Esophagus muscularis mucosa (tissue), 4 donors: ENCODE measurements at regions of chr1 and their contacts with region 1.

Region 1: DNA sequence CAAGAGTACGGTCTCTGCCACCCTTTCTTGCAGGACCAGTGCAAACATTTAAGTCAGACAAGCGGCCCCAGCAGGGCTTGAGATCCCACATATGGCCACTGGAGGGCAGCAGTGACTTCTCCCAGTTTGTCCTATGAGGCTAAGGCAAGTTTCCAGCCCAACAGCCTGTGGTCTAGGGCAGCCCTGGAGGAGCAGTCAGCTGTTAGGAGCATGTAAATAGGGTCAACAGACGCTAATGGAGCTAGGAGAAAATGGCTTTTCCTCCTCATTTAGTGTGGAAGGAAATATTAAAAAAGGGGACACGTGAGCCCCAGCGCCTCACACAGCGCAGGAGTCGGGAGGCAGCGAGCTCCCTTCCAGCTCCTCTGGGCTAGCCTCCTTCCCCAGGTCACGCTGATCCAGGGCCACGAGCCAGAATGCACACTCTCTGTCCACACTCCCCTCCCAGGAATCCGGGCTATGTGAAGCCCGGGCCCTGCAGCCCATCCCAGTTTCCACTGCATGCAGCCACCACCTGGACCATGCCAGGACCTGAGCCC is 95.6 kb downstream of the LAMC2 start:
- DNase-seq: peak; percentile 98
- H3K4me3 ChIP-seq: peak overlapping the region in 2 of 4 donors; percentile 16 to 20
- H3K27ac ChIP-seq: peak overlapping the region; percentile 56 to 77 (median 62)
- H3K4me1 ChIP-seq: peaks cover 34 to 42% (median 40%) of the 10 kb centered on the region in 4 donors
- H3K27me3 ChIP-seq: no peaks in the 10 kb centered on the region
- CTCF ChIP-seq: peak; percentile 96 to 97 (median 97)
- EP300 ChIP-seq: no peak
- POLR2A ChIP-seq: no peak

Region 2: GRCh38 chr1:183318433-183318832 is 36.8 kb after region 1 on chr1:
- intact Hi-C with region 1: loop called (anchors 1 kb)
- DNase-seq: peak; percentile 95
- H3K4me3 ChIP-seq: no peak overlapping the region
- H3K27ac ChIP-seq: peak overlapping the region; percentile 47 to 73 (median 59)
- H3K4me1 ChIP-seq: peaks cover 24 to 43% (median 33%) of the 10 kb centered on the region in 4 donors
- H3K27me3 ChIP-seq: no peaks in the 10 kb centered on the region
- CTCF ChIP-seq: peak; percentile 64 to 74 (median 73)
- EP300 ChIP-seq: no peak
- POLR2A ChIP-seq: no peak

Region 3: GRCh38 chr1:183339556-183340167 is 58.0 kb after region 1 on chr1:
- intact Hi-C with region 1: no loop called
- DNase-seq: no peak
- H3K4me3 ChIP-seq: no peak overlapping the region
- H3K27ac ChIP-seq: no peak overlapping the region
- H3K4me1 ChIP-seq: no peaks in the 10 kb centered on the region
- H3K27me3 ChIP-seq: no peaks in the 10 kb centered on the region
- CTCF ChIP-seq: no peak
- EP300 ChIP-seq: no peak
- POLR2A ChIP-seq: no peak

Region 4: DNA sequence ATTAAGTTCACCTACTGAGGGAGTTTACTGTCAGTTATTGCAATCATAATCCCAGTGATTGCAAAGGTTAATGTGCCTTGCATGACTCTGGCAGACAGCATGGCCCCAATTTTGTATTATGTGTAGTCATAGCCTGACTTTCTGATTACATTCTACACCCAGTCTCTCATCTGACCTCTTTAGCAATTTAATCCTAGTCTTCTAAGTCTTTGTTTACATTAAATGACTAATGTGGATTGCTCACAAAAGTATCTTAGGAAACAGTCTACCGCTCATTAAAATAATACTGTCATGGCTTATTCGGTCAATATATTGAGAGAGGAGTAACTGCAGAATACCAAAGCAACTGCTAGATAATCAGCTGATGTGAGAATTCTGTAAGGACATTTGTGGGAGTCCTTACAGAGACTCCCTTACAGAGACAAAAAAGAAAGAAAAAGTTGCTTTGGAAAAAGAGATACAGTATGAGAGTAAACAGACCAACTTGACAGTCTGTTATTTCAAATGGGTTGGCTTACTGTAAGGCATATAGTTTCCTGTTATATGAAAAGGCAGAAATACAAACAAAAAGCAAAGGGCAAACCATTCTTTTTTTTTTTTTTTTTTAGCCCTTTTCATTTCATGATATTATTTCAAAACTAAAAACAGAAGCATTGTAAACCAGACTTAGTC is 233.5 kb after region 1 on chr1:
- intact Hi-C with region 1: no loop called
- DNase-seq: no peak
- H3K4me3 ChIP-seq: no peak overlapping the region
- H3K27ac ChIP-seq: no peak overlapping the region
- H3K4me1 ChIP-seq: peaks cover 8 to 22% (median 16%) of the 10 kb centered on the region in 4 donors
- H3K27me3 ChIP-seq: no peaks in the 10 kb centered on the region
- CTCF ChIP-seq: no peak
- EP300 ChIP-seq: no peak
- POLR2A ChIP-seq: no peak

Region 5: DNA sequence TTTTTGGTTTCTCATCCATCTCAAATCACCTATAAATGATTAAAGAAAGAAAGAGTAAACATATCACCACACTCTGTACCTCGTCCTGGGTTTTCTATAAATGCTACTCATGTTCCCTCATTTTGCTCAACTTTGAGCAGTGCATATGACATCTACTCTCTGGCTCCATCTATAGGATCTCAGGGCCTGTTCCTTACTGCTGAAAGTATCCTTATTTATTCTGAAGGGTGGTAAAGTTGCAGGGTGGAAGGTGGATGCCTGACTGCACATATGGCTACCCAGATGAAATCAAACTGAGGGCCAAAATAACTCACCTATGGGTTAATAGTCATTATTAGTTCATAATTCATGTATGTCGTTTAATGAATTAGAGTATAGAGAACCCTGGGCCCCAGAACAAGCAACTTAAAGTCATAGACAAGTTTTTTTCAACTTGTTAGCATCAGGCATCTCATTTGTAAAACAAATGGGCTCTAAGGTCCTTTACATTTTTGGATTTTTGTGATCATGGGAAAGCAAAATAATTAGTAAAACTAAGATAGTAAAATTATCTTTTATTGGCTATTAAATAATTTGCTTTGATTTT is 262.1 kb after region 1 on chr1:
- intact Hi-C with region 1: loop called (anchors 5 kb)
- DNase-seq: no peak
- H3K4me3 ChIP-seq: no peak overlapping the region
- H3K27ac ChIP-seq: no peak overlapping the region
- H3K4me1 ChIP-seq: peaks cover 0 to 7% (median 6%) of the 10 kb centered on the region in 4 donors
- H3K27me3 ChIP-seq: no peaks in the 10 kb centered on the region
- CTCF ChIP-seq: peak; percentile 52 to 72 (median 63)
- EP300 ChIP-seq: no peak
- POLR2A ChIP-seq: no peak